A549 (cell line): ENCODE measurements at regions of chr22 and their contacts with region 1.

Region 1: GRCh38 chr22:26461188-26461810 is 22.3 kb downstream of the HPS4 start:
- DNase-seq: peak; percentile 32 to 46
- ATAC-seq: peak; percentile 89 to 97
- H3K4me3 ChIP-seq: no peak overlapping the region
- H3K27ac ChIP-seq: no peak overlapping the region
- H3K4me1 ChIP-seq: no peaks in the 10 kb centered on the region
- CTCF ChIP-seq: peak; percentile 62
- EP300 ChIP-seq: no peak
- POLR2A ChIP-seq: no peak
- RAD21 ChIP-seq: peak; percentile 58 to 64

Region 2: GRCh38 chr22:25869771-25870170 is 591.5 kb before region 1 on chr22:
- CTCF ChIA-PET with region 1: no interaction called
- POLR2A ChIA-PET with region 1: no interaction called
- DNase-seq: no peak
- ATAC-seq: no peak
- H3K4me3 ChIP-seq: no peak overlapping the region
- H3K27ac ChIP-seq: no peak overlapping the region
- H3K4me1 ChIP-seq: no peaks in the 10 kb centered on the region
- CTCF ChIP-seq: no peak
- EP300 ChIP-seq: no peak
- POLR2A ChIP-seq: no peak
- RAD21 ChIP-seq: no peak

Region 3: DNA sequence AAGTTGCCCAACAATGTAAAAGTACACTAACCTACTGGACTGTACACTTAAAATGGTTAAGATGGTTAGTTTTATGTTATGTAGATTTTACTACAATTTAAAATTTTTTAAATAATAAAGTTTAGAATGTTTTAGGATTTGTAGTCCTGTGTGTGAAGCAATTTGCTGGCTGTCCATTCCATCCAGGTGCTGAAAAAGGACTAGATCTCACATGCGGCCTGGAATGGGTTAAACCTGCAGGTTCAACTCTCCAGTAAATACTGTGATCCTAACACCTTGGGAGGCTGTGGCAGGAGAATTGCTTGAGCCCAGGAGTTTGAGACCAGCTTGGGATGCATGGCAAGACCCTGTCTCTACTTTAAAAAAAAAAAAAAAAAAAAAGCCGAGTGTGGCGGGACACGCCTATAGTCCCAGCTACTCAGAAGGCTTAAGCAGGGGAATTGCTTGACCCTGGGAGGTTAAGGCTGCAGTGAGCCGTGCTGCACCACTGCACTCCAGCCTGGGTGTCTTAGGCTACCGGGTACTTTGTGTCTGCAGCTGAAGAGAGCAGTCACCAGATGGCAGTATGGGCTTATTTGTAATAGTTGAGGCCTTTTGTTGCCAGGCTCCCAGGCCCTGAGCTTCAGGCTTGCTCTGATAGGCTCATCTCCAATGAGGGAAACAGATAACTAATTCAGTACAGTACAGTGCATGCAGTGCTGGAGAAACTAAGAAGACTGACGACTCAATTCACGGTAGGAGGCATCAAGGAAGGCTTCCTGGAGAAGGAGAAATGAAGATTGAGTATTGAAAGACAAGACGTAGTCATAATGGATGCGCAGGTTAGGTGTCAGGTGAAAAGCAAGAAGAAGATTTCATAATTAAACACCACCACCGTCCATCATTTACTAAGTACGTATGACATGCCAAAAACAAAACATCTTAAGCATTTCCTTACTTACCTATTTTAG is 97.0 kb before region 1 on chr22:
- CTCF ChIA-PET with region 1: interaction called, 65 read pairs
- POLR2A ChIA-PET with region 1: no interaction called
- DNase-seq: peak; percentile 36 to 81
- ATAC-seq: peak; percentile 90 to 96
- H3K4me3 ChIP-seq: no peak overlapping the region
- H3K27ac ChIP-seq: no peak overlapping the region
- H3K4me1 ChIP-seq: no peaks in the 10 kb centered on the region
- CTCF ChIP-seq: peak; percentile 56
- EP300 ChIP-seq: no peak
- POLR2A ChIP-seq: no peak
- RAD21 ChIP-seq: peak; percentile 66 to 72

Region 4: GRCh38 chr22:26398741-26399153 is 62.6 kb before region 1 on chr22:
- CTCF ChIA-PET with region 1: interaction called, 85 read pairs
- POLR2A ChIA-PET with region 1: no interaction called
- DNase-seq: peak; percentile 41 to 60
- ATAC-seq: peak; percentile 88 to 90; a peak in 5 of 6 replicates
- H3K4me3 ChIP-seq: no peak overlapping the region
- H3K27ac ChIP-seq: no peak overlapping the region
- H3K4me1 ChIP-seq: no peaks in the 10 kb centered on the region
- CTCF ChIP-seq: peak; percentile 63
- EP300 ChIP-seq: no peak
- POLR2A ChIP-seq: no peak
- RAD21 ChIP-seq: peak; percentile 81

Region 5: GRCh38 chr22:26416670-26417250 is 44.5 kb before region 1 on chr22:
- CTCF ChIA-PET with region 1: interaction called, 20 read pairs
- POLR2A ChIA-PET with region 1: no interaction called
- DNase-seq: no peak
- ATAC-seq: peak; percentile 77 to 88
- H3K4me3 ChIP-seq: no peak overlapping the region
- H3K27ac ChIP-seq: no peak overlapping the region
- H3K4me1 ChIP-seq: peaks cover 12% of the 10 kb centered on the region; the same call in 2 of the 3 replicates
- CTCF ChIP-seq: no peak
- EP300 ChIP-seq: no peak
- POLR2A ChIP-seq: no peak
- RAD21 ChIP-seq: no peak

Region 6: GRCh38 chr22:26445577-26446275 is 15.6 kb before region 1 on chr22:
- CTCF ChIA-PET with region 1: interaction called, 11 read pairs
- POLR2A ChIA-PET with region 1: no interaction called
- DNase-seq: no peak
- ATAC-seq: no peak
- H3K4me3 ChIP-seq: no peak overlapping the region
- H3K27ac ChIP-seq: no peak overlapping the region
- H3K4me1 ChIP-seq: no peaks in the 10 kb centered on the region
- CTCF ChIP-seq: no peak
- EP300 ChIP-seq: no peak
- POLR2A ChIP-seq: no peak
- RAD21 ChIP-seq: no peak

Region 7: DNA sequence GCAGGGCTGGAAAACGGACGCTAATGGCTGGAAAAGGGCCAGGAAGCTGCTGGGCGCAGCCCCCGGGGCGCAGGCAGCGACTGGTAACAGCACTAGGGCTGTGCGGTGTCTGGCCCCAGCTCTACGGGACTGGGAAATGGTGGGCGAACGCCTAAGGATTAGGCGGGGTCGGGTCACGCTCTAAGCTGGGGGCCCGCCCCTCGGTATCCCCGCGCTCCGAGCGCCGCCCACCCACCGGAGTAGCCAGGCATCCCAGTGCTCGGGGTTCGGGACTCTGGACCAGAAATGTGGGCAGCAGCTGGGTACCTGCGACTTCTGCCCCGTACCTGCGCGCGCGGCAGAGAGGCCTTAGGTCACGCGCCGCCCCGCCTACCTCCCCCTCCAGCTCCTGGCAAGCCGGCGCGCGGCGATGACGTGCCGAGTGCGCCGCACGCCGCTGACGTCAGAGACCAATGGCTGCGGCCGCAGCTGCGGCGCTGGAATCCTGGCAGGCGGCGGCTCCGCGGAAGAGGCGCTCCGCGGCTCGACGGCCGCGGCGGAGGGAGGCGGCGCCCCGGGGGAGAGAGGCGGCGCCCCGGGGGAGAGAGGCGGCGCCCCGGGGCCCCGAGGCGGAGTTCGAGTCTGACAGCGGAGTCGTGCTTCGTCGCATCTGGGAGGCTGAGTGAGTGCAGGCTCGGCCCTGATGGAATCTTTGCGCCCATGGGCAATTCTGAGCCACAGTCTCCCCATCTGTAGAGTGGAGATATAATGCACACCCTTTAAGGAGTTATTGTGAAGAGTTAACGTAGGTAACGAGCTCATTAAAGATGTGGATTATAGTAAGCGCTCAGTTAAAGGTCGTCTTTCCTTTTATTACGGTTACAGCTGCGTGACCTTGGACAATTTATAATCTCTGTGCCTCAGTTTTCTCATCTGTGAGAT is 22.4 kb after region 1 on chr22 and contains the starts of genes HPS4 and SRRD:
- CTCF ChIA-PET with region 1: interaction called, 17 read pairs
- POLR2A ChIA-PET with region 1: interaction called, 3 read pairs
- DNase-seq: peak; percentile 62 to 86
- ATAC-seq: peak; percentile 89 to 92
- H3K4me3 ChIP-seq: peak within 1 kb of the TSS; percentile 84
- H3K27ac ChIP-seq: peak within 1 kb of the TSS; percentile 86 to 100
- H3K4me1 ChIP-seq: peaks cover 17% of the 10 kb centered on the region; the same call in 2 of the 3 replicates
- CTCF ChIP-seq: no peak
- EP300 ChIP-seq: no peak
- POLR2A ChIP-seq: peak; percentile 66
- RAD21 ChIP-seq: no peak
- polyA plus RNA-seq, gene HPS4: 25.7 and 30.2 TPM in 2 replicates
- polyA plus RNA-seq, gene SRRD: 36.4 and 38.4 TPM in 2 replicates